Pancreas (tissue), 10 donors: ENCODE measurements at regions of chr2 and their contacts with region 1.

Region 1: DNA sequence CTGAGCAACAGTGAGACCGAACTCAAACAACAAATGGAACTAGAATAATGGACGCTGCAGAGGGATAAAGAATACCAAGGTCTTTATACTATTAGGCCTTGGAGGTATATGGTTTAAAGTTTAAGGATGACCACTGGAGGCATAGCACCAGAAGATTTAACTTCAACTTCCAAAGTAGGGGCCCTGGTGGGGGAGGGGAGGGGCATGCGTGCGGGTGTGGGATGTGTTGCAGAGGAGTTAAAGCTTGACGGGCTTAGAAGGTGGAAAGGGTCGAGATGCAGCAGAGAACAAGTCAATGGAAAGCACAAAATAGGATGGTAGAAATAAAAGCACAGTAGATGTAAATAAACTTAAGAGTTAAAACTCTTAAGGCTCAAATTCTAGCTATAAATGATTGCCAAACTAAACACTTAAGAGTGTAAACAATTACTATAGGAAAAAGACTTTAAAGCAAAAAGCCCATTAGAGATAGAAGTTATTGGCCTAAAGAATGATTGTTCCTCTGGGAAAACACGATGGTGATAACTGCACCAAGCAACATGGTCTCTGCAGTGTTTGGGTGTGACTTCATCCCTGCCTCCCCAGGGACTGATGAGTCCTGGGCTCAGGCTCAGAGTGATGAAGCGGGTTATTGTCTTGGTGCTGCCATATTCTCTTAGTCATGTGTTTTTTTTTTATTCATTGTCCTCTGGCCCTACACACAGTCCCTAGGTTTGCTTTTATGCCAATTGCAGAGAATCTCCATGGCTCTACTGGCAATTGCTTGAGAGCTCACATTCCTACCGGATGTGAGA is 13.0 kb downstream of the RRM2 start:
- DNase-seq: peak in 1 of 6 donors; percentile 5
- ATAC-seq: no peak
- H3K4me3 ChIP-seq: no peak overlapping the region
- H3K27ac ChIP-seq: no peak overlapping the region
- H3K4me1 ChIP-seq: no peaks in the 10 kb centered on the region
- H3K27me3 ChIP-seq: no peaks in the 10 kb centered on the region
- CTCF ChIP-seq: no peak

Region 2: GRCh38 chr2:10424051-10424450 is 288.6 kb after region 1 on chr2:
- intact Hi-C with region 1: loop called in 1 of 3 experiments (anchors 10 kb)
- DNase-seq: peak in 1 of 6 donors; percentile 23
- ATAC-seq: no peak
- H3K4me3 ChIP-seq: no peak overlapping the region
- H3K27ac ChIP-seq: no peak overlapping the region
- H3K4me1 ChIP-seq: no peaks in the 10 kb centered on the region
- H3K27me3 ChIP-seq: no peaks in the 10 kb centered on the region
- CTCF ChIP-seq: no peak